ENCODE measurements at regions of chr22 and their contacts with region 1.

Region 1: GRCh38 chr22:24189249-24190158 is 8.2 kb downstream of the SUSD2 start:
- DNase-seq: no peak
- H3K4me3 ChIP-seq: no peak overlapping the region
- H3K27me3 ChIP-seq: no peaks in the 10 kb centered on the region
- CTCF ChIP-seq: peak; percentile 95

Region 2: GRCh38 chr22:24067587-24068376 is 121.7 kb before region 1 on chr22:
- CTCF ChIA-PET with region 1: no interaction called
- POLR2A ChIA-PET with region 1: no interaction called
- DNase-seq: no peak
- H3K4me3 ChIP-seq: no peak overlapping the region
- H3K27me3 ChIP-seq: no peaks in the 10 kb centered on the region
- CTCF ChIP-seq: no peak

Region 3: GRCh38 chr22:24175160-24175808 is 14.2 kb before region 1 on chr22:
- CTCF ChIA-PET with region 1: interaction called, 21 read pairs
- POLR2A ChIA-PET with region 1: no interaction called
- DNase-seq: no peak
- H3K4me3 ChIP-seq: no peak overlapping the region
- H3K27me3 ChIP-seq: no peaks in the 10 kb centered on the region
- CTCF ChIP-seq: peak; percentile 96

Region 4: GRCh38 chr22:24200616-24201212 is 11.2 kb after region 1 on chr22:
- CTCF ChIA-PET with region 1: interaction called, 32 read pairs
- POLR2A ChIA-PET with region 1: no interaction called
- DNase-seq: no peak
- H3K4me3 ChIP-seq: no peak overlapping the region
- H3K27me3 ChIP-seq: no peaks in the 10 kb centered on the region
- CTCF ChIP-seq: no peak

Region 5: GRCh38 chr22:24230911-24231656 is 41.6 kb after region 1 on chr22:
- CTCF ChIA-PET with region 1: interaction called, 18 read pairs
- POLR2A ChIA-PET with region 1: no interaction called
- DNase-seq: no peak
- H3K4me3 ChIP-seq: no peak overlapping the region
- H3K27me3 ChIP-seq: no peaks in the 10 kb centered on the region
- CTCF ChIP-seq: peak; percentile 27; the same call in 1 of the 2 replicates

Region 6: DNA sequence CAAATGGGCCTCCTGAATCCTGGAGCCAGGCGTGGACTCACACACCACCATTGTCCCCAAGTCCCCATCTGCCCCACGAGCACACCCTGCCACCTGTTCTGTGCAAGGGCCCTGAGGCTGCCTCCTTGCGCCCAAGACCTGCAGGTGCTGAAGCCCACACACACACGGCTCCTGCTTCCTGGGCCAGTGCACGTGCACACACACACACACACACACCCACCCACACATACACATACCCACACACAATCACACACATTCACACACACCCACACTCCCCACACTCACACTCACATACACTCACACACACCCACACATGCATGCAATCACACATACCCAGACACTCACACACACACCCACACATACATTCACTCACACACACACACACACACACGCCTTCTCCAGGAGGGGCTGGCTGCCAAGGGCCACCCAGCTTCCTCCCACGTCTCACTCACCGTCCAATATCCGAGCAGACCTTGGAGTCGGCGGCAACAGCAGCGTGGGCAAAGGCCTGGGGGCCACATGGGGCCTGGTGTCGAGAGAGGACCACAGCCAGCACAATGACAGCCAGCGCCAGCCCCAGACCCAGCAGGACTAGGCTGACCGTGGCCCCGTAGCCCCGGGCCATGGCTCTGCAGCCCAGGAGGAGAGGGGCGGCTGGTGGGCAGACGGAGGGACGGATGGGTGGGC is 54.7 kb after region 1 on chr22:
- CTCF ChIA-PET with region 1: interaction called, 92 read pairs
- POLR2A ChIA-PET with region 1: interaction called, 4 read pairs
- DNase-seq: no peak
- H3K4me3 ChIP-seq: no peak overlapping the region; the same call in 1 of the 2 replicates
- H3K27me3 ChIP-seq: no peaks in the 10 kb centered on the region
- CTCF ChIP-seq: no peak

Measured in BJ (cell line).